Mammary epithelial cell (primary cell): ENCODE measurements at regions of chr7 and their contacts with region 1.

Region 1: GRCh38 chr7:43572516-43573049 is 10.3 kb upstream of the STK17A start:
- DNase-seq: peak; percentile 99
- H3K4me3 ChIP-seq: no peak overlapping the region
- H3K27ac ChIP-seq: peak overlapping the region; percentile 99
- H3K4me1 ChIP-seq: peaks cover 52% of the 10 kb centered on the region
- H3K27me3 ChIP-seq: no peaks in the 10 kb centered on the region
- CTCF ChIP-seq: no peak

Region 2: GRCh38 chr7:43462836-43463235 is 109.7 kb before region 1 on chr7:
- CTCF ChIA-PET with region 1: no interaction called
- dilution Hi-C with region 1: no loop called
- in situ Hi-C with region 1: no loop called
- intact Hi-C with region 1: loop called (anchors 5 kb)
- DNase-seq: no peak
- H3K4me3 ChIP-seq: no peak overlapping the region
- H3K27ac ChIP-seq: no peak overlapping the region
- H3K4me1 ChIP-seq: peaks cover 28% of the 10 kb centered on the region
- H3K27me3 ChIP-seq: no peaks in the 10 kb centered on the region
- CTCF ChIP-seq: no peak

Region 3: GRCh38 chr7:43522406-43523156 is 50.0 kb before region 1 on chr7:
- CTCF ChIA-PET with region 1: no interaction called
- dilution Hi-C with region 1: no loop called
- in situ Hi-C with region 1: no loop called
- intact Hi-C with region 1: loop called (anchors 2 kb)
- DNase-seq: peak; percentile 98
- H3K4me3 ChIP-seq: no peak overlapping the region
- H3K27ac ChIP-seq: peak overlapping the region; percentile 58
- H3K4me1 ChIP-seq: peaks cover 32% of the 10 kb centered on the region
- H3K27me3 ChIP-seq: no peaks in the 10 kb centered on the region
- CTCF ChIP-seq: no peak

Region 4: GRCh38 chr7:43535810-43536585 is 36.6 kb before region 1 on chr7:
- CTCF ChIA-PET with region 1: no interaction called
- dilution Hi-C with region 1: no loop called
- in situ Hi-C with region 1: no loop called
- intact Hi-C with region 1: loop called (anchors 2 kb)
- DNase-seq: peak; percentile 85
- H3K4me3 ChIP-seq: no peak overlapping the region
- H3K27ac ChIP-seq: peak overlapping the region; percentile 27
- H3K4me1 ChIP-seq: peaks cover 34% of the 10 kb centered on the region
- H3K27me3 ChIP-seq: no peaks in the 10 kb centered on the region
- CTCF ChIP-seq: no peak

Region 5: GRCh38 chr7:43808135-43808809 is 235.7 kb after region 1 on chr7:
- CTCF ChIA-PET with region 1: no interaction called
- dilution Hi-C with region 1: no loop called
- in situ Hi-C with region 1: no loop called
- intact Hi-C with region 1: no loop called
- DNase-seq: no peak
- H3K4me3 ChIP-seq: no peak overlapping the region
- H3K27ac ChIP-seq: no peak overlapping the region
- H3K4me1 ChIP-seq: no peaks in the 10 kb centered on the region
- H3K27me3 ChIP-seq: no peaks in the 10 kb centered on the region
- CTCF ChIP-seq: no peak